T-cell (primary cell): ENCODE measurements at regions of chr6 and their contacts with region 1.

Region 1: DNA sequence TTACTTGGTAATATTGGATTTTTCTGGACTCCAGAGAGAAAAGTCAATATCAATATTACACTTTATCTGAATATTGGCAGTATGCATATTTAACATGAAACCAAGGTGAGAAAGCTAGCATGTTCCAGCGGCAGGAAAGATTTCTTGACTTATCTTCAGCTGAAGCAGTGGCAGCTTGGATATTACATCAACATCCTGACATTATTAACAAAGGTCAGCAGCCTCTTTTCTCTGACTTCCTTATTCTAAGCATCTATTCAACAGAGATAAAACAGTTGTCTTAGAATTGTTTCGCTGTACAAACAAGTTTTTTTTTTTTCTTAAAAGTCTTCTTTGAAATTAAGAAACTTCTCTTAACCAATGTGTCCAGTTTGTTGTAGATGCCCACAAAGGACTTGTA is 11.8 kb downstream of the DCBLD1 start:
- DNase-seq: no peak
- ATAC-seq: no peak
- H3K4me3 ChIP-seq: no peak overlapping the region
- H3K4me3 Mint-ChIP-seq: no peak overlapping the region
- H3K27ac ChIP-seq: no peak overlapping the region
- H3K27ac Mint-ChIP-seq: no peak overlapping the region
- H3K4me1 ChIP-seq: no peaks in the 10 kb centered on the region
- H3K4me1 Mint-ChIP-seq: peaks cover 0 to 16% (median 9%) of the 10 kb centered on the region in 3 donors
- H3K27me3 ChIP-seq: no peaks in the 10 kb centered on the region
- H3K27me3 Mint-ChIP-seq: no peaks in the 10 kb centered on the region

Region 2: GRCh38 chr6:117568247-117568646 is 74.0 kb after region 1 on chr6:
- CTCF ChIA-PET with region 1: no interaction called
- POLR2A ChIA-PET with region 1: interaction called in 1 of 2 experiments, 12 read pairs
- DNase-seq: no peak
- ATAC-seq: no peak
- H3K4me3 ChIP-seq: no peak overlapping the region
- H3K4me3 Mint-ChIP-seq: no peak overlapping the region
- H3K27ac ChIP-seq: no peak overlapping the region
- H3K27ac Mint-ChIP-seq: no peak overlapping the region
- H3K4me1 ChIP-seq: no peaks in the 10 kb centered on the region
- H3K4me1 Mint-ChIP-seq: peaks cover 0 to 5% (median 0%) of the 10 kb centered on the region in 3 donors
- H3K27me3 ChIP-seq: no peaks in the 10 kb centered on the region
- H3K27me3 Mint-ChIP-seq: no peaks in the 10 kb centered on the region